MCF 10A (cell line): ENCODE measurements at regions of chr17 and their contacts with region 1.

Region 1: DNA sequence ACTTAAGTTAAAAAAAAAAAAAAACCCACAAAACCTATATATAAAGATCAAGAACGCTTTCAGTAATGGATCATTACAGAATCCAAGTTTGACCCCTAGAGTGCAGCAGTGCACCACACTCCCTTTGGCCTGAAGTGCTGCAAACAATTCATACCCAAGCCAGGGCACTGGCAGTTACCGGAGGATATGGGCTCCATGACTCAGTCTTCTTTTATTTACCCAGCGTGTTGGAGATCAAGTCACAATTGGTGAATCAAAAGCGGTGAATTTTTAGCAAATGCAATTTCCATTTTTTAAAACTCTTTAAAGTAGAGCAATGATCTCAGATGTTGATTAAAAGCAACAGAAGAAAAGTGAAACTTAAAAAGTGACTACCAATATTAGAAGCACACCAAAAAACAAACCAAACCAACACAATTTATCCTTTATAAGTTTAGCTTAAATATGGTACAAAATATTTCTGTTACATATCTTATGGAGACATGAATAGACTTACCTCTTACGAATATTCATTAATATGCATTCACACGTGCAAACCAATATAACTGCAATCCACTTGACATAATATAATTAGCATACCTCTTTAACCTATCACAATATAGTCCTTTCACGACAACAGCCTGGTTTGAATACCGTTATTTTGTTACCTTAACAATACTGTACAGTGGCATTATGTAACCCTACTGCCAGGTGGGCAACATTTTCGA is 46.3 kb downstream of the ZNF652 start:
- DNase-seq: peak; percentile 89
- H3K4me3 Mint-ChIP-seq: peak overlapping the region; percentile 25
- H3K27ac Mint-ChIP-seq: no peak overlapping the region
- H3K4me1 Mint-ChIP-seq: peaks cover 17% of the 10 kb centered on the region
- H3K27me3 Mint-ChIP-seq: no peaks in the 10 kb centered on the region
- CTCF ChIP-seq: peak; percentile 83

Region 2: GRCh38 chr17:49327835-49328784 is 12.4 kb after region 1 on chr17:
- CTCF ChIA-PET with region 1: interaction called, 3 read pairs
- POLR2A ChIA-PET with region 1: interaction called, 13 read pairs
- intact Hi-C with region 1: no loop called
- DNase-seq: no peak
- H3K4me3 Mint-ChIP-seq: no peak overlapping the region
- H3K27ac Mint-ChIP-seq: no peak overlapping the region
- H3K4me1 Mint-ChIP-seq: peaks cover 6% of the 10 kb centered on the region
- H3K27me3 Mint-ChIP-seq: no peaks in the 10 kb centered on the region
- CTCF ChIP-seq: no peak

Region 3: DNA sequence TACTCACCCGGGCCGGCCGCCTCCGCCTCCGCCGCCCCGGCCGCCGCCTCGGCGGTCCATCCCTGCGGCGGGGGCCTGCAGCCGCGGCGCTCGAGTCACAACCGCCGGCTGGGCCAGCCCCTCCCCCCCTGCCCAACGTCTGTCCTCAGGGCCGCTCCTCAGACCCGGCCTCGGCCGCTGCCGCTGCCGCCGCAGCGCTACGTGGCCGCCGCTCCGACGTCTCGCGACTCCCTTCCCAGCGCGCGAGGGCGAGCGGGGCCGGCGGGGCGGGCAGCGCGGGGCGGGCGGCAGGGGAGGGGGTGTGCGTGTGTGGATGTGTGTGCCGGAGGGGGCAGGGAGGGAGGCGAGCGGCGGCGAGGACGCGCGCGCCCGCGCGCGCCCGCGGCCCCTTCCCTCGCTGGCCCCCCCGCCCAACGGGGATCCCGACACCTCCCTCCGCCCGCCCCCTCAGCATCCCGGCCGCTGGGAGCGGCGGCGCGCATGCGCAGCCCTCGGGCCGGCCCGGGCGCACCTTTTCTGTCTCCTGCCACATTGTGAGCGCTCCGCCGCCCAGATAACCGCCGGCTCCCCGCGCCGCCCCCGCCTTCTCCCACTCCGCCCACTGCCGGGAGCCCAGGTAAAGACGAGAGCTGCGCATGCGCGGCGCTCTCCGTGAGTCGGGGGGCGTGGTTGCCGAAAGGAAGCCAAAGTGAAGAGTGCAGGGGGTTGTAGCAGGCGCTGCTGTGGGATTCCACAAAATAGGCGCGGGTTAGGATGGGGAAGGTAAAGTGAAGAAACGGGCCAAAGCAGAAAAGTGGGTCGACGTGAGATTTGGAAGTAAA is 46.4 kb after region 1 on chr17 and contains the start of gene ZNF652:
- CTCF ChIA-PET with region 1: interaction called, 3 read pairs
- POLR2A ChIA-PET with region 1: interaction called, 21 read pairs
- intact Hi-C with region 1: loop called (anchors 10 kb)
- DNase-seq: peak; percentile 94
- H3K4me3 Mint-ChIP-seq: peak within 1 kb of the TSS; percentile 86
- H3K27ac Mint-ChIP-seq: peak within 1 kb of the TSS; percentile 69
- H3K4me1 Mint-ChIP-seq: peaks cover 38% of the 10 kb centered on the region
- H3K27me3 Mint-ChIP-seq: no peaks in the 10 kb centered on the region
- CTCF ChIP-seq: no peak
- total RNA-seq, gene ZNF652: 18.8 and 19.6 TPM in 2 replicates

Region 4: DNA sequence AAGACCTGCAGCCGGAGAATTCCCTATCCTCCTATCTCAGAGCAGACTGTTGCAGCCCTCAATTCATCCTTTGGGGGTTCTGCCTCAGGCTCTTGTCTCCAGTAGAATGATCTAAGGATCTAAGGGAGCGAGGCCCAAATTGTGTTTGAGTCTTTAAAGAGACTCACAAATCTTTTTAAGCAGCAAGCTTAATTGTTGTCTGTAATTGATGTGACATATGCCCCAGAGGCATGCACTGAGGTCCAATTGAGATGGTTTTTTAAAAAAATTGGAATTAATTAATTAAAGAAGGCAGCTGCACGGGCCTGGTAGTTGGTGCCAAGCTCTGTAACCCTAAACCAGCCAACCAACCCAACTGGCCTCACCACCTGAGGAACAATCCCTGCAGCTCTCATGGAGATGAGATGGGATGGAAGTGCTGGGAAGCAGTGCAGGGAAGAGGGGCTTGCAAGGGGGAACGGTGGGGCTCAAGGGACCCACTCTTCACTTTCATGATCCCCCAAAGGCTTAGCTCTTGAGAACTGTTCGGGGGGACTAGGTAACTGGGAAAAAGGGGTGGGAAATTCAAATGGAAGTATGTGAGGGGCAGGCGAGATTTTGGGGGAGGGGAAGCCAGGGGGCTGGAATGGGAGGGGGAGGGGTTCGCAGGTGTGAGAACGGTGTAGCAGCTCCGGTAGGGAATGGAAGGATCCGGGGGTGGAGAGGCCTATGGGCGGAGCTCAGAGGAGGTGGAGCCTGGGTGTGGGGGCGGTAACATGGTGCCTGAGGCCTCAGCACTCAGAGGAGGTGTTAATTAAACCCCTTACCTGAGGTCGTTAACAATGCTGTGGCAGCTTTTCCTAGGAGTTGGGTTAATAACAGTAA is 55.5 kb after region 1 on chr17:
- CTCF ChIA-PET with region 1: interaction called, 10 read pairs
- POLR2A ChIA-PET with region 1: interaction called, 5 read pairs
- intact Hi-C with region 1: loop called (anchors 10 kb)
- DNase-seq: no peak
- H3K4me3 Mint-ChIP-seq: no peak overlapping the region
- H3K27ac Mint-ChIP-seq: no peak overlapping the region
- H3K4me1 Mint-ChIP-seq: no peaks in the 10 kb centered on the region
- H3K27me3 Mint-ChIP-seq: no peaks in the 10 kb centered on the region
- CTCF ChIP-seq: no peak

Region 5: GRCh38 chr17:49390548-49391324 is 75.0 kb after region 1 on chr17:
- CTCF ChIA-PET with region 1: interaction called, 61 read pairs
- POLR2A ChIA-PET with region 1: interaction called, 5 read pairs
- intact Hi-C with region 1: loop called (anchors 1 kb)
- DNase-seq: no peak
- H3K4me3 Mint-ChIP-seq: no peak overlapping the region
- H3K27ac Mint-ChIP-seq: no peak overlapping the region
- H3K4me1 Mint-ChIP-seq: peaks cover 5% of the 10 kb centered on the region
- H3K27me3 Mint-ChIP-seq: no peaks in the 10 kb centered on the region
- CTCF ChIP-seq: no peak

Region 6: GRCh38 chr17:49399995-49400394 is 84.3 kb after region 1 on chr17:
- CTCF ChIA-PET with region 1: interaction called, 61 read pairs
- POLR2A ChIA-PET with region 1: interaction called, 6 read pairs
- intact Hi-C with region 1: loop called (anchors 1 kb)
- DNase-seq: no peak
- H3K4me3 Mint-ChIP-seq: no peak overlapping the region
- H3K27ac Mint-ChIP-seq: no peak overlapping the region
- H3K4me1 Mint-ChIP-seq: peaks cover 6% of the 10 kb centered on the region
- H3K27me3 Mint-ChIP-seq: no peaks in the 10 kb centered on the region
- CTCF ChIP-seq: no peak

Region 7: GRCh38 chr17:49414622-49415350 is 99.1 kb after region 1 on chr17 and contains the start of gene PHB1:
- CTCF ChIA-PET with region 1: interaction called, 23 read pairs
- POLR2A ChIA-PET with region 1: no interaction called
- intact Hi-C with region 1: no loop called
- DNase-seq: peak; percentile 98
- H3K4me3 Mint-ChIP-seq: peak within 1 kb of the TSS; percentile 84
- H3K27ac Mint-ChIP-seq: peak within 1 kb of the TSS; percentile 78
- H3K4me1 Mint-ChIP-seq: peaks cover 6% of the 10 kb centered on the region
- H3K27me3 Mint-ChIP-seq: no peaks in the 10 kb centered on the region
- CTCF ChIP-seq: no peak
- total RNA-seq, gene PHB1: 122 and 134 TPM in 2 replicates